Activated CD4-positive, alpha-beta T cell treated with anti-CD3 and anti-CD28 coated beads for 36 hours (primary cell): ENCODE measurements at regions of chr6 and their contacts with region 1.

Region 1: DNA sequence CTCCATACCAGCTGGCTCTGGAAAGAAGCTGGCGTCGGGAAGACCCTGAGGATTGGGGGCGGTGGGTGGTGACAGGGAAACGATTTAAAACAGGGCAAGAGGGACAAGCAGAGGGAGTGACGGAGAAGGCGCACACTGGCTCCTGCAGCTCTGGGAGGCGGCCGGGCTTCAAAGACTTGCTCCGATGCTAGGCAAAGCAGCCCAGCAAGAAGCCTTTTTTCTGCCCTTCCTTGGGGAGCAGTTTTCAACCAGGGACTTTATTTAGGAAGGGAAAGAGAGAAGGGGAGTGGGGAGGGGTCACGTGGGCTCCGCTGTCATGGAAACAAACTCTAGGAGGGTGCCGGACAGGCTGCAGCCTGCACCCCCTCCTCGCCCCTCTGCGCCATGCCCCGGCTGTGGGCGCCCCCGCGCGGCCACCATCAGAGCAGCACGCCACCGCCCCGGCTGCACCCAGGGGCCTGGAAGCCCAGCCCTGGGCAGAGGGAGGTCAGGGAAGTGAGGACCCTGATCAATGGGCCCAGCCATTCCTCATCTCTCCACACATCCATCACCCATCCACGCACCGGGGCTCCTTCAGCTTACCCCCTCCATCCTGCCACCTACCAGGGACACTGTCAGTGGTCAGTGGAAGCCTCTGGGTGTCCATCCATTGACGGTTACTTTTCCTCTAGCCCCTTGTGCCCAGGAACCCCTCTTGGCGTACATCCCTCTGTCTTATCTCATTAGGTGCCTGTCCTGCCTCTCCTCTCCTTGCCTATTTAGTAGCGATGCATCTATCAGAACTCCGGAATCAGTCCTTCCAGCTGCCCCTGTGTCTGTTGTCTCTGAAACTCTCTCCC is 66.6 kb upstream of the CCDC167 start:
- DNase-seq: peak; percentile 84
- ATAC-seq: peak; percentile 93
- H3K4me3 Mint-ChIP-seq: no peak overlapping the region
- H3K27ac Mint-ChIP-seq: no peak overlapping the region
- H3K4me1 Mint-ChIP-seq: peaks cover 11% of the 10 kb centered on the region
- H3K27me3 Mint-ChIP-seq: peaks cover 4% of the 10 kb centered on the region

Region 2: GRCh38 chr6:37324131-37325033 is 241.9 kb before region 1 on chr6:
- CTCF ChIA-PET with region 1: interaction called, 8 read pairs
- POLR2A ChIA-PET with region 1: no interaction called
- intact Hi-C with region 1: loop called in 1 of 2 experiments (anchors 1 kb)
- DNase-seq: peak; percentile 62
- ATAC-seq: peak; percentile 91
- H3K4me3 Mint-ChIP-seq: no peak overlapping the region
- H3K27ac Mint-ChIP-seq: peak overlapping the region; percentile 39
- H3K4me1 Mint-ChIP-seq: peaks cover 23% of the 10 kb centered on the region
- H3K27me3 Mint-ChIP-seq: no peaks in the 10 kb centered on the region

Region 3: GRCh38 chr6:37483917-37484785 is 82.2 kb before region 1 on chr6:
- CTCF ChIA-PET with region 1: interaction called, 20 read pairs
- POLR2A ChIA-PET with region 1: no interaction called
- intact Hi-C with region 1: loop called (anchors 1 kb)
- DNase-seq: peak; percentile 86
- ATAC-seq: peak; percentile 61
- H3K4me3 Mint-ChIP-seq: no peak overlapping the region
- H3K27ac Mint-ChIP-seq: no peak overlapping the region
- H3K4me1 Mint-ChIP-seq: peaks cover 15% of the 10 kb centered on the region
- H3K27me3 Mint-ChIP-seq: no peaks in the 10 kb centered on the region

Region 4: DNA sequence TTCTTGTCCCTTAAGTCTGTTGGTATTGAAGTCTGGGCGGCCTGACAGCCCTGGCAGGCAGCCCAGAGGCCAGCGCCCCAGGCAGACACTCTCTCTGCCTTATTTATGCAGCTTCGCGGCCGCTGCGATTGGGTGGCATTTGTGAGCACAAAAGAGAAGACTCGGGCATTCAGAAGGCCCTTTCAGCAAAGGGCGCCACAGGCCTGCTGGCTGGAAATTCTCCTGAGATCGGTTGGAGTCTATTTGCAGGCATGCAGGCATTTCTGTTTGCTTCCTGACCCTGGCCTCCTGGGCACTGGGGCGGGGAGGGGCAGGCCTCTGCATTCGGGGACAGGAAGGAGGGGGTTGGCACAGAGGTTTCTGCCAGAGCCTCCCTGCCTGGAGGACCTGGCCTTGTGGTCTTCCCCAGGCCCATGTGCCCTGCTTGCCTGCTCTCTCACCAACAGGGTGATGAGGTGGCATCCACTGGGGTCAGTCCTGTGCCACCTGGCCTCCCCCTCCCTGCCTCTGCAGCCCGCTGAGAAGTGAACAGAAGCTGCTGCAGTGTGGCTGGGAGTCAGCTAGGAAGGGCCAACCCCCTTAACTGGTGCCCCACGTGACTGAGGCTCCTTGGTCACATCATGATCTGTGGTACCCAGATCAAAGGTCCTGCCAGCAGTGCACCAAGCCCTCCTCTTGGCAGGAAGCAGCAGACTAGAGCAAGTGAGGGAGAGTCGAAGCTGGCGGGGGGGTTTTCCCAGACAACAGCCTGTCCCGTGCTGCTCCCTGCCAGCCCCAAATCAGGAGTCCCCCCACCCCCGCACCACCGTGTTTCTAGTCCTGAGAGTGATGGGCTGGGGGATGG is 50.0 kb before region 1 on chr6:
- CTCF ChIA-PET with region 1: interaction called, 10 read pairs
- POLR2A ChIA-PET with region 1: no interaction called
- intact Hi-C with region 1: no loop called
- DNase-seq: peak; percentile 95
- ATAC-seq: peak; percentile 78
- H3K4me3 Mint-ChIP-seq: peak overlapping the region; percentile 70
- H3K27ac Mint-ChIP-seq: peak overlapping the region; percentile 91
- H3K4me1 Mint-ChIP-seq: peaks cover 84% of the 10 kb centered on the region
- H3K27me3 Mint-ChIP-seq: no peaks in the 10 kb centered on the region

Region 5: DNA sequence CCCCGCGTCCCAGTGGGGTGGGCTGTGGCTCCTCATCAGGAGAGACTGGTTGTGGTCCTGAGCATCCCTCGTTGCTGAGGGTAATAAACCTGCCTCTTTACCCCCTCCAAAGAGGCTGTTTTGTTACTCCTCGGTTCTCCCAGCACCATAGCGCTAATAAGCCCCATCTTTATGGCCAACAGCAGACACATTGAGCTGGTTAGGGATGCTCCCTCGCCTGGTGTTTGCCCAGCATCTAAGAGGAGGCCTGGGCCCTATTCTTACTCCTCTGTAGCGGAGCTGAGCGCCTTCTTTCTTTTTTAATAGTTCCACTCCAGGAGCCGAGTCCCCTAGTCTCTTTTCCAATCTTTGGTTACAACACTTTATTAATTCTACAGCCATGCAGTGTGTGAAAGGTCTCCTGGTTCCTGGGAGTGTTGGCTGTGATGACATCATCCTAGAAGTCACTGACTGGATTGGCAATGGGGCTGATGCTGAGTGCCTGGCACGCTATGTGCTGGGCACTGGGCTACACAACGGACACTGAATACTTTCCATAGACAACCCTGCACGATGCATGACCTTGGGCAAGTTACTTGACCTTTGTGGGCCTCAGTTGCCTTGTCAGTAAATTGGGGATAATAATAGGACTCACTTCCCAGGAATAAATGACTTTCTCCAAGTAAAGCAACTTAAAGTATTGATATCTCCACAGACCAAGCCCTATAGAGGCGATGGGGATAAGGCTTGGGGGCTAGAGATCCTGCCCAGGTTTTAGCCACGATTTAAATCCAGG is 16.0 kb before region 1 on chr6:
- CTCF ChIA-PET with region 1: interaction called, 11 read pairs
- POLR2A ChIA-PET with region 1: no interaction called
- intact Hi-C with region 1: no loop called
- DNase-seq: no peak
- ATAC-seq: no peak
- H3K4me3 Mint-ChIP-seq: no peak overlapping the region
- H3K27ac Mint-ChIP-seq: no peak overlapping the region
- H3K4me1 Mint-ChIP-seq: peaks cover 47% of the 10 kb centered on the region
- H3K27me3 Mint-ChIP-seq: peaks cover 2% of the 10 kb centered on the region